GM12878 (cell line): ENCODE measurements at regions of chr2 and their contacts with region 1.

Region 1: GRCh38 chr2:62334440-62335058 is 138.6 kb downstream of the B3GNT2 start:
- DNase-seq: peak; percentile 66
- ATAC-seq: peak; percentile 74
- H3K4me3 ChIP-seq: no peak overlapping the region
- H3K27ac ChIP-seq: peak overlapping the region; percentile 99
- H3K4me1 ChIP-seq: peaks cover 40% of the 10 kb centered on the region
- H3K27me3 ChIP-seq: no peaks in the 10 kb centered on the region
- CTCF ChIP-seq: no peak
- EP300 ChIP-seq: no peak
- POLR2A ChIP-seq: peak; percentile 59; the same call in 1 of the 2 replicates
- RAD21 ChIP-seq: 0 out of 2 replicates have a peak, but pooled peaks have one; percentile 1

Region 2: DNA sequence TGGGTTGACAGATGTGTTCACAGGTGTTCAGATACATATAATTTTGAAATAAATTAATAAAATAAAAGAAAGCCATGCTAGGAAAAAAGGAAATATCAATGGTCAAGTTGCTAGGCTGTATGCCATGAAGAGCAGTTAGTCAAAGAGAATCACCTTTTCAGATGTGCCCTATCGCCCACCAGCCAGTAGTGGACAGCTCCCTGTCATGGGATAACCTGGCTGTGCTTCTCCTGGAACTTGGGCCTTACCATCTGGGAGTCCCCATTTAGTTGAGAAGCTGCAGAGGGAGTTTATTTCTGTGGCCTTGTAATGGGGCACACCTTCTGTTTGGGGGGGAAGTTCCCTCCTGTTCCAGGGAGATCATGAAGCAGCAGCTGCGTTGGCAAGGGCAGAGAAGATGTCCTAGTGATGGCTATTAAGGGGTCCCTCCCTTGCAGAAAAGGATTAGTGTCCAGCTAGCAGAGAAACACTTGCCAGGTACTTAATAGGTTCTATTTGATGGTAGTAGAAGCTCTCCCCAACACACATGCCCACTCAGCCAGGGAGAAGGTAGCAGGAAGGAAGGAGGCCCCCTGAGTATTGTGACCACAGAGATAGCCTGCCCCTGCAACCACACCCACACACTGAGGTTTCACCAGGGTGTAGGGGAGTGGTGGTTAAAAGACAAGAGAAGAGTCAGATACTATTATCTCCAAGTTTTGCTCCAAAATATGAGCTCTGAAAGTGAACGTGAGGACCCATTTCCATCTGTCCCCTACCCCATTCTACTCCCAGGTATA is 20.9 kb before region 1 on chr2:
- CTCF ChIA-PET with region 1: interaction called, 17 read pairs
- POLR2A ChIA-PET with region 1: interaction called, 37 read pairs
- RAD21 ChIA-PET with region 1: interaction called, 126 read pairs
- SMC1A ChIA-PET with region 1: interaction called, 467 read pairs
- in situ Hi-C with region 1: no loop called
- intact Hi-C with region 1: no loop called
- DNase-seq: peak; percentile 91
- ATAC-seq: peak; percentile 88
- H3K4me3 ChIP-seq: peak overlapping the region; percentile 27; the same call in 1 of the 2 replicates
- H3K27ac ChIP-seq: peak overlapping the region; percentile 92
- H3K4me1 ChIP-seq: peaks cover 54% of the 10 kb centered on the region
- H3K27me3 ChIP-seq: no peaks in the 10 kb centered on the region
- CTCF ChIP-seq: no peak
- EP300 ChIP-seq: no peak
- POLR2A ChIP-seq: no peak
- RAD21 ChIP-seq: peak; percentile 33; the same call in 1 of the 2 replicates

Region 3: DNA sequence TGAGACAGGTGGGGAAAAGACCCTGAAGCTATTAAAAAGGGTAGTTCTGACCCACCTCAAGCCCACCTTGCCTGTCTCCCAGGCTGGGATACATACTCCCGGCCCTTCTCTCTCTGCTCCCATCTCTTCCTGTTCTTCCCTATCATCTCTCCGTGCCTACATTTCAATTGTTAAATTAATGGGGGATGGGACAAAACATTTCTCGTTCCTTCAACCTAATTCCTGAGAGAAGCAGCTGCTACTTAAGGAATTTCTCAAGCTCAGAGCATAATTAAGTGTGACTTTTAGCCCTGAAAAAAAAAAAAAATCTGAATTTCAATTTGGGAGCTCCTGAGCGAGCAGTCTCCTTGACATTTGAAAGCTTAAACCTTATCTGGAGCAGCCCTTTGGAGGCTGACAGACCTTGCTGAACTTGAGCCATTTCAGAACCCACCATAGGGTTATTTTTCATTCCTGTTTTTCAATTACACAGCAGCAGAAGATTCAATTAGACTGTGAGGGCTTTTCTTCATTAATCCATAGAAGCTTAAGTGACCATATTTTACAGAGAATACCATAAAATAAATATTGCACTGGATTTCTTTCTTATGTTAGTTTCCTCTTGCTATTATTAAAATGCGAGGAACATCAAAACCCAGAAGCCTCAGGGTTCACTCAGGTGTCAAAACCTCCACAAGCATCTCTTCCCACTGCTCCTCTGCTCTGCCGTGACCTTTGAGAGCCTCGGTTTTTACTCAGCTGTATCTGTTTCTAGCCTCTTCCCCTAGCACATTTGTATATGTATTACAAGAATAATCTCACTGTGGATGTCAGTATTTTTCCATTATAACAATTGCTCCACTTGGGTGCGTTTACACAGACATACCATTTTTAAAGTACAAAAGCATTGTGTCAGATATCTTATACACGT is 12.9 kb before region 1 on chr2:
- CTCF ChIA-PET with region 1: interaction called, 4 read pairs
- POLR2A ChIA-PET with region 1: interaction called, 15 read pairs
- RAD21 ChIA-PET with region 1: interaction called, 24 read pairs
- SMC1A ChIA-PET with region 1: interaction called, 467 read pairs
- in situ Hi-C with region 1: no loop called
- intact Hi-C with region 1: no loop called
- DNase-seq: no peak
- ATAC-seq: peak; percentile 68
- H3K4me3 ChIP-seq: no peak overlapping the region
- H3K27ac ChIP-seq: peak overlapping the region; percentile 77
- H3K4me1 ChIP-seq: peaks cover 32% of the 10 kb centered on the region
- H3K27me3 ChIP-seq: no peaks in the 10 kb centered on the region
- CTCF ChIP-seq: no peak
- EP300 ChIP-seq: no peak
- POLR2A ChIP-seq: no peak
- RAD21 ChIP-seq: no peak

Region 4: GRCh38 chr2:62348700-62349099 is 14.2 kb after region 1 on chr2:
- CTCF ChIA-PET with region 1: interaction called, 7 read pairs
- POLR2A ChIA-PET with region 1: interaction called, 6 read pairs
- RAD21 ChIA-PET with region 1: interaction called, 25 read pairs
- SMC1A ChIA-PET with region 1: interaction called, 22 read pairs
- in situ Hi-C with region 1: no loop called
- intact Hi-C with region 1: no loop called
- DNase-seq: peak; percentile 78
- ATAC-seq: peak; percentile 57
- H3K4me3 ChIP-seq: no peak overlapping the region
- H3K27ac ChIP-seq: peak overlapping the region; percentile 84
- H3K4me1 ChIP-seq: peaks cover 38% of the 10 kb centered on the region
- H3K27me3 ChIP-seq: no peaks in the 10 kb centered on the region
- CTCF ChIP-seq: no peak
- EP300 ChIP-seq: peak in 1 of 2 experiments; percentile 53; a peak in 1 of 4 replicates
- POLR2A ChIP-seq: no peak
- RAD21 ChIP-seq: no peak

Region 5: GRCh38 chr2:62406573-62407043 is 72.1 kb after region 1 on chr2:
- CTCF ChIA-PET with region 1: interaction called, 3 read pairs
- POLR2A ChIA-PET with region 1: interaction called, 3 read pairs
- RAD21 ChIA-PET with region 1: interaction called, 6 read pairs
- SMC1A ChIA-PET with region 1: interaction called, 12 read pairs
- in situ Hi-C with region 1: no loop called
- intact Hi-C with region 1: no loop called
- DNase-seq: peak; percentile 77
- ATAC-seq: peak; percentile 93
- H3K4me3 ChIP-seq: no peak overlapping the region
- H3K27ac ChIP-seq: peak overlapping the region; percentile 11
- H3K4me1 ChIP-seq: peaks cover 41% of the 10 kb centered on the region
- H3K27me3 ChIP-seq: no peaks in the 10 kb centered on the region
- CTCF ChIP-seq: no peak
- EP300 ChIP-seq: peak in 1 of 2 experiments; percentile 42; a peak in 1 of 4 replicates
- POLR2A ChIP-seq: no peak
- RAD21 ChIP-seq: no peak

Region 6: DNA sequence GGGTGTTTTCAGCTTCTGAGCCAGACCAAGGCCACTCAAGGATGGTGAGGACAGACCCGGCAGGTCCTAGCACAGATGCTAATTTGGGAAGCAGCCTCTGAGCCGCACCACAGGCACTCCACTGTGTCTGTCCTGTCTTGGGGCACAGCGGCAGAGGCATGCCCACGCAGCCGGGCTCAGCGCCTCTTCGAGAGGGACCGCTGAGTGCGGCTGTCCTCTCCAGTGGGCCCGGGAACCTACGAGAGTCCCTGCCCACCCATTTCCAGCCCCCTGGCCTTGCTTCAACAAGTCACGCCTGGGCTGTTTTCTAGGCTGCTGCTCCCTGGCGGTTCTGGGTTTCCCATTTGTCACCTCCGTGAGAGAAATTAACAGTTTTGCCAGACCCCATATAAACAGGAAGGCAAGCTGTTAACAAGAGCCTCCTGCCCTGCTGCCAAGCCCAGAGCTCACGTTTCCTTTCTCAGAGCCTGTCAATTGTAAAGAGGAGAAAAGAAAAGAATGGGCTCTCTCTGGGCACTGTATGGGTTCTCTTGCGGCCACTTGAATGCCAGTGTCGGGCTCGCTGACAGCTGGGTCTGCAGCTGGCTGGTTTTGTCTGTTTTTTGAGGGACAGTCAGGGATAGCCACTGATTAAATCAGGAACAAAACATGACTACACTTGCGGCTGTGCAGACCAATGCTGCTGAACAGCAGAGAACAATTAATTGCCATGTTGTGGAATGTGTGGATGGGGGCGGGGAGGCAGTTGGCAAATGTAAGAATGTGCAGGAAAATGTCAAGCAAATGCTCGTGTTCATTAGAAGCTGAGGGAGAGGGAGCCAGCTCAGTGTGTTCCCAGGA is 140.8 kb after region 1 on chr2:
- CTCF ChIA-PET with region 1: no interaction called
- POLR2A ChIA-PET with region 1: no interaction called
- RAD21 ChIA-PET with region 1: no interaction called
- SMC1A ChIA-PET with region 1: no interaction called
- in situ Hi-C with region 1: no loop called
- intact Hi-C with region 1: no loop called
- DNase-seq: no peak
- ATAC-seq: no peak
- H3K4me3 ChIP-seq: no peak overlapping the region
- H3K27ac ChIP-seq: no peak overlapping the region
- H3K4me1 ChIP-seq: no peaks in the 10 kb centered on the region
- H3K27me3 ChIP-seq: no peaks in the 10 kb centered on the region; a peak in 1 of 4 replicates
- CTCF ChIP-seq: no peak
- EP300 ChIP-seq: no peak
- POLR2A ChIP-seq: no peak
- RAD21 ChIP-seq: no peak

Region 7: DNA sequence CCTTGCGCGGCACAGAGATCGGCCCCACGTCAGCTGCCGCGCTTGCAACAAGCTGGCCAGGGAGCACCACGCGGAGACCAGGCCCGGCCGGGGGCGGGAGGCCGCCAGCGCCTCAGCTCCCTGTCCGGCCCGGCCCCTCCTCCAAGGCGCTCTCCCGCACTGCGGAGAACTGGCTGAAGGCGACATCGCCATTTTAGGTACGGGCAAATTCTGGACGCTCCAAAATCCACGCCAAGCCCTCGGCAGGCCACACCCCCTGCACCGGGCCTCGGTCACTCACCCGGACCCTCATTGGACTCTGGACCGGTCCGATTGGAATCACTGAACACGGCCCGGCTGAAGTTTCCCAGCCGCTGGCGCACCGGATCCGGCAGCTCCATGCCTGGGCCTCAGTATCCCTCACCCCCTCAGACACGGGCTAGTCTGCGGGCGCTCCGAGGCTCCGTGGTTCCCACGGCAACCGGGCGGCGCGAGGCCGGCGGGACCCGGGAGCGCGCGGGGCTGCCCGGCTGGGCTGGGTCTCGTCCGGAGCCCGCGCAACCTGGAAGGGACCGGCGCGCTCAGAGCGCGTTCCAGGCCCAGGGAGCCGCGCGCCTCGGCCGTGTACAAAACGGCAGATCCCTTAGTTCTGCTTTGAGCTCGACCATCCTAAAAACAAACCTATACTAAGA is 171.3 kb after region 1 on chr2 and contains the start of gene TMEM17:
- CTCF ChIA-PET with region 1: no interaction called
- POLR2A ChIA-PET with region 1: no interaction called
- RAD21 ChIA-PET with region 1: no interaction called
- SMC1A ChIA-PET with region 1: no interaction called
- in situ Hi-C with region 1: no loop called
- intact Hi-C with region 1: no loop called
- DNase-seq: peak; percentile 35
- ATAC-seq: peak; percentile 94
- H3K4me3 ChIP-seq: peak within 1 kb of the TSS; percentile 88
- H3K27ac ChIP-seq: peak within 1 kb of the TSS; percentile 27; the same call in 1 of the 2 replicates
- H3K4me1 ChIP-seq: no peaks in the 10 kb centered on the region; the same call in 1 of the 2 replicates
- H3K27me3 ChIP-seq: no peaks in the 10 kb centered on the region
- CTCF ChIP-seq: no peak
- EP300 ChIP-seq: no peak
- POLR2A ChIP-seq: peak; percentile 47
- RAD21 ChIP-seq: 0 out of 2 replicates have a peak, but pooled peaks have one; percentile 4
- polyA plus RNA-seq, gene TMEM17: 1.2 to 1.6 TPM